BJ (cell line): ENCODE measurements at regions of chr22 and their contacts with region 1.

Region 1: DNA sequence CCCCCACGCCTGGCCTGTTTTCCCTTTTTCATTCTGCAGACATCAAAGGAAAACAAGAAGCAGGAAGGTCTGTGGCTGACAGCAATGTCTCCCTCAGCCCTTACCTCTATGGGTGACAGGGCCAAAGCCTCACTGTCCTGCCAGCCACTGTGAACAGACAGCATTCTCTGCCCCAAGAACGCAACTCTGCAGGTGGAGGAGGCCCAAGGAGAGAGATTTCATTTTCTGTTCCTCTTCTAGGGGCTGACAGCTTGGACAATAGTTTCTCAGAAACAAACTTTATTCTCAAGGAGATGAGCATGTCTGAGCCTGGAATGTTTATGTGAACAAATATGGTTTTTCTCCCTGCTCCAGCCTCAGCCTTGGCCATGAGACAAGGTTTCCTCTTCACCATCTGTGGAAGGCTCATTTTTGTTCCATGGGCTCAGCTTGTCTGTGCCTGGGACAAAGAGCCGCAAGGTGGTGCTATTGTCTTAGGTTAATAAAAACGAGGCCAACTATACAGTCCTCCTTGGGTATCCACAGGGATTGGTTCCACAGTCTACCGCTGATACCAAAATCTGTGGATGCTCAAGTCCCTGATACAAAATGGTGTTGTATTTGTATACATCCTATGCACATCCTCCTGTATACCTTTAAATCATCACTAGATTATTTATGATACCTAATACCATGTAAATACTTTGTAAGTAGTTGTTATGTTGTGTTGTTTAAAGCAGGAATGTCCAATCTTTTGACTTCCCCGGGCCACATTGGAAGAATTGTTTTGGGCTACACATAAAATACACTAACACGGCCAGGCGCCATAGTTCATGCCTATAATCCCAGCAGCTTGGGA is 5.8 kb downstream of the PIWIL3 start:
- DNase-seq: no peak
- H3K4me3 ChIP-seq: no peak overlapping the region
- H3K27me3 ChIP-seq: no peaks in the 10 kb centered on the region; the same call in 1 of the 2 replicates
- CTCF ChIP-seq: peak; percentile 72

Region 2: GRCh38 chr22:24758164-24758799 is 10.5 kb before region 1 on chr22:
- CTCF ChIA-PET with region 1: interaction called, 35 read pairs
- POLR2A ChIA-PET with region 1: no interaction called
- DNase-seq: no peak
- H3K4me3 ChIP-seq: no peak overlapping the region
- H3K27me3 ChIP-seq: peaks cover 6% of the 10 kb centered on the region; the same call in 1 of the 2 replicates
- CTCF ChIP-seq: peak; percentile 70

Region 3: GRCh38 chr22:24803011-24803542 is 34.3 kb after region 1 on chr22:
- CTCF ChIA-PET with region 1: interaction called, 17 read pairs
- POLR2A ChIA-PET with region 1: no interaction called
- DNase-seq: no peak
- H3K4me3 ChIP-seq: no peak overlapping the region
- H3K27me3 ChIP-seq: peaks cover 3% of the 10 kb centered on the region
- CTCF ChIP-seq: peak; percentile 94

Region 4: DNA sequence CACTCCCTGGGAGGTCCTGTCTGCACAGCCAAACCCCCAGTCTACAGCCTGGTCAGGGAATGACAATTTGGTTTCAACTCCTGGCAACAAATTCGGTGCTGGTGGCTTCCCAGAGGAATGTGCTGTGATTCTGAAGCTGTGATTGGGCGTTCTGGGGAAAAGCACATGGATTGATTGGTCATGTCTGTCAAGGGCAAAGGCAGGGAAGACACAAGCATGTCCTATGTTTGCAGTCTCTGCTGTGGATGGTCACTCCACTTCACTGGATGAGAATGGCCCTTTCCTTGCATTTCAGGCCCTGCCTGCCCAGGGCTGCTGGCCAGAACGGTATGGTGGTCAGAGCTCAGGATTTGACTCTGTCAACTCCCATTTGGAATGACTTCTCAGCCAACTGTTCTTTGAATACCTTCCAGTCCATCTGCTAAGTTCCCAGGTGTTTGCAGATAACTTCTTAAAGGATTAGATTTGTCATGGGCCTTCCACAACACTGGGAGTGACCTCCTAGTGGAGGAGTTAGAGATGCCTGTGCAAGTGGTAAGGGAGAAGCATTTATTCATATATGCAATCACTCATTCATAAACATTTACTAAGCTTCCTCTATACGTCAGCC is 79.9 kb after region 1 on chr22:
- CTCF ChIA-PET with region 1: interaction called, 60 read pairs
- POLR2A ChIA-PET with region 1: no interaction called
- DNase-seq: no peak
- H3K4me3 ChIP-seq: no peak overlapping the region
- H3K27me3 ChIP-seq: no peaks in the 10 kb centered on the region
- CTCF ChIP-seq: no peak

Region 5: DNA sequence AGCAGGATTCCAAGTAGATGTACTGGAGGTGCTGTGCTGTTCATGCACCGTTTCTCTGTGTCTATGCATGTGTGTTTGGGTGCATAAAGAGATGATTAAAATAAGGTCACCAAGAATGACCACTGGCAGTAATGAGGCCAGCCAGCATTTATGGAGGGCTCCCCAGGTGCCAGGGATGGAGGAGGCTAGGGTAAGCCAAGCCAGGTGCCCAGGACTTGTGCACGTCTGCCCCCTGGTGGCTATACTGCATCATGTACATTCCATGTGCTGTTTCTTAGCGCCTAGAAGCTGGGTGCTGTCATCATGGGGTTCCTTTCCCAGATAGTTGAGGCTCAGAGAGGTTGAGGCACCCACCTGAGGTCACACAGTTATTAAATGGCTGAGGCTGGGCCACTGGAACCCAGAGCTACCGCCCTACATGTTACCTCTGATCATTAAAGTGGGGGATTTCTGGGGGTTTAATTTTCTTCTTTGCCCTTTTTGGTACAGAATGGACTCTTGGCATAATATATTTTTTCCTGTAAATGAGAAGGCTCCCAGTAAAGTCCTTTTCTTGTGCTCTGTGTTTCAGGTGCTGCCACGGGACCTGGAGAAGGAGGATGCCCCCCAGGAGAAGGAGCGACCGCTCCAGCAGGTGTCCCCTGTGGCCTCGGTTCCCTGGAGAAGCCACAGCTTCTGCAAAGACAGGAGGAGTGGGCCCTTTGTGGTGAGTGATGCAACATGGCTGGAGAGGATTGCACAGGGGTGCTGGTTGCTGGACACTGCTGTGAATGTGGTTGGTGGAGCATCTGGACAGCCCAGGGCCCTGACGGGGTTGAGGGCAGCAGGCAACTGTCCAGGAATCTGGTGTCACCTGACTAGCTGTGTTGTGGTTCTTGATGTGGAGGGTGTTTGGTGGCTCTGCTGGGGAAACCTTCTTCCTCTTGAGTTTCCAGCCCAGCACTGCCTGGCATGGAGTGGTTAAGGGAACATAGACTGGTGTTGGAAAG is 280.2 kb after region 1 on chr22:
- CTCF ChIA-PET with region 1: interaction called, 81 read pairs
- POLR2A ChIA-PET with region 1: no interaction called
- DNase-seq: no peak
- H3K4me3 ChIP-seq: no peak overlapping the region
- H3K27me3 ChIP-seq: no peaks in the 10 kb centered on the region
- CTCF ChIP-seq: peak; percentile 77